ENCODE measurements at regions of chr9 and their contacts with region 1.

Region 1: GRCh38 chr9:36995927-36996705 is 38.0 kb downstream of the PAX5 start:
- DNase-seq: peak; percentile 50
- H3K4me3 ChIP-seq: peak overlapping the region; percentile 22
- H3K27ac ChIP-seq: no peak overlapping the region
- H3K4me1 ChIP-seq: no peaks in the 10 kb centered on the region
- H3K27me3 ChIP-seq: no peaks in the 10 kb centered on the region
- CTCF ChIP-seq: peak; percentile 52

Region 2: DNA sequence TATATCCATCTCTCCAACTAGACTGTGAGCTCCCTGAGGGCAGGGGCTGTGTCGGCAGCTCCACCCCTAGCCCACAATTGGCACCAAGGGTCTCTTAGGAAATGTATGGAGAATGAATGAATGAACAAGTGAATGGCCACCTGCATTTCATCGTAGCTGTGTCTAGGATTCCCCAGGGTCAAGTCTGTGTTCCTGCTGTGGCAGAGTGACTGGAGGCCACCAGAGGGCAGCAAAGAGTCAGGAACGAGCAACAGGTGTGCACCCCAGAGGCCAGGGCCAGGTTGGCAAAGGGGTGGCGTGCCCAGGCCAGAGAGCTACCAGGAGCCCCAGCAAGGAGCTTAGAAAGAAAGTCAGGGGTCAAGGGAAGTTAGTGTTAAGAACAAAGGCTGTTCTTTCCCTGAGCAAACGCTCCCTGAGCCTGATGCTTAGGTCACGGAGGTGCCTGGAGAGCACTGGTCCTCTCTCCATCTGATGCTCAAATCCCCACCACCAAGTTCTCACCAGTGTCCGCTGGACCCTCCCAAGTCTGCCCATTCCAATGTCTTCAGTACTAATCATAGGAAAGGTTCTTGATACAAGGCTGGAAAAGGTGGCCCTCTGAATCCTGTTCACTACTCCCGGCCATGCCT is 122.8 kb before region 1 on chr9:
- intact Hi-C with region 1: loop called (anchors 2 kb)
- DNase-seq: peak; percentile 76
- H3K4me3 ChIP-seq: no peak overlapping the region
- H3K27ac ChIP-seq: no peak overlapping the region
- H3K4me1 ChIP-seq: no peaks in the 10 kb centered on the region
- H3K27me3 ChIP-seq: no peaks in the 10 kb centered on the region
- CTCF ChIP-seq: peak; percentile 90

Region 3: DNA sequence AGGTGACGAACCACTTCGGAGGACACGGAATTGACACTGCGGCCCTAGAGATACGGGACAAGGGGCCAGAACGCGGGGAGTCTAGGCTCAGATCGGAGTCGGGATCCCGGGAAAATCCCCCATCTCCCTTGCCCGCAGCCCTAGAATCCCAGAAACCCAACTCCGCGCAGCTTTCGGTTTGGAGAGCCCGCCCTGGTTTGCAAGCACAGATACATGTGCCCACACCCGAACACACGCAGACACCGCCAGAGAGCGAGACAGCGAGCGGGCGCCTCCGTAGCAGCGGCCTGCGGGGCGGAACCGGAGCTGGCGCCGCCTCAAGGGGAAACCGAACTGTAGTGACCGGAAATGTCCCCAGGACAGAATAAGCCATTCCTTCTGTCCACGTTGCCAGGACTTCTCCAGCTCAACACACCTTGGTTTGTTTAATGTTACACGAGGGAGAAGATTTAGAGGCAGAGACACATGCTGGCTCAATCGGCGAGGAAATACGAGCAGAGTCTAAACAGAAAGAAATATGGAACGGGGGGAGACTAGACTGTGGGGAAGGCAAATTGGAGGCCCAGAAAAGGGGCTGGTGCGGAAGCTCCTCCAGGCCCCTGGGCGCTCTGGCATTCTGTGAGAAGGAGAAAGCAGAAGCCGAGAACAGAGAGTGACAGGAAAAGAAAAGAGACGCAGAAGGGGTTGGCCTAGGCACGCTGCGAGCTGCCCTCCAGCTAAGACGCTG is 40.8 kb after region 1 on chr9:
- intact Hi-C with region 1: no loop called
- DNase-seq: peak; percentile 47
- H3K4me3 ChIP-seq: peak overlapping the region; percentile 54
- H3K27ac ChIP-seq: no peak overlapping the region
- H3K4me1 ChIP-seq: peaks cover 22% of the 10 kb centered on the region
- H3K27me3 ChIP-seq: peaks cover 84% of the 10 kb centered on the region
- CTCF ChIP-seq: no peak

Region 4: DNA sequence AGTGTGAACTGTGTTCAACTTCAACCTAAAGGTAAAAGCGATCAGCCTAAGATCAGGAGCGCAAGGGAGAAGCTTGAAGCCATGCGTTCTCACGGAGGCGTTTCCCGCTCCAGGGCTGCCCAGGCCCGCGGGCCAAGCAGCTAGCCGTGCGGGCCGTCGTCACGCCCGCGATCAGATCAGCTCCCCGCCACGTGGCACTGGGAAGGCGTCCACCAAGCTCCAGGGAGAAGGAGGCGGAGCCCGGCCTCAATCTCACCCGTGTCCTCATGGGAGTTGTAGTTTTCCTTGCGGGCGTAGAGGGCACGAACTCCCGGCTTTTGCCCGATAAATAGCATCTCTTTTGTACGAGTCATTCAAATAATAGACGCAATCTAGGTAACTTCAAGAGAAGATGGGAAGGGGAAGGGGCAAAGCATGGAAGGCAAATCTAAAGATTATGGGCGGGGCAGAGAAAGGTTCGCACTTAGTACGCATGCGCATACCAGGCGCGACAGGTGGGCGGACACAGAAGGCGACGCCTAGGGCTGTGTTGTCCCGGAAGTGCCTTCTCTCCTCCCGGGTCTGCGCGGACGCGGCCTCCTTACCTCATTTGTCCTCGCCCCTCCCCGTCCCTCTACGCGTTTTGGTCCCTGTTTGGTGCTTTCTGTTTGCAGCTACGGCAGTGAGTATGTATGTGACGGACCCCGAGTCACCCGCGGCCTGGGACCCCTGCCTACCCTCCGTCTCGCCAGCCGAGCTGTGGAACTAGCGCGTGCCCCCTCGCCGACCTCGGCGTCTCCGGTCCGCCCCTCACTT is 83.5 kb after region 1 on chr9:
- intact Hi-C with region 1: no loop called
- DNase-seq: peak; percentile 93
- H3K4me3 ChIP-seq: peak overlapping the region; percentile 59
- H3K27ac ChIP-seq: peak overlapping the region; percentile 54
- H3K4me1 ChIP-seq: no peaks in the 10 kb centered on the region
- H3K27me3 ChIP-seq: no peaks in the 10 kb centered on the region
- CTCF ChIP-seq: no peak

Region 5: GRCh38 chr9:37209431-37210386 is 213.6 kb after region 1 on chr9:
- intact Hi-C with region 1: no loop called
- DNase-seq: no peak
- H3K4me3 ChIP-seq: no peak overlapping the region
- H3K27ac ChIP-seq: no peak overlapping the region
- H3K4me1 ChIP-seq: no peaks in the 10 kb centered on the region
- H3K27me3 ChIP-seq: no peaks in the 10 kb centered on the region
- CTCF ChIP-seq: no peak

Region 6: GRCh38 chr9:37390759-37391158 is 394.6 kb after region 1 on chr9:
- intact Hi-C with region 1: loop called (anchors 5 kb)
- DNase-seq: peak; percentile 63
- H3K4me3 ChIP-seq: no peak overlapping the region
- H3K27ac ChIP-seq: no peak overlapping the region
- H3K4me1 ChIP-seq: no peaks in the 10 kb centered on the region
- H3K27me3 ChIP-seq: no peaks in the 10 kb centered on the region
- CTCF ChIP-seq: peak; percentile 47

Region 7: DNA sequence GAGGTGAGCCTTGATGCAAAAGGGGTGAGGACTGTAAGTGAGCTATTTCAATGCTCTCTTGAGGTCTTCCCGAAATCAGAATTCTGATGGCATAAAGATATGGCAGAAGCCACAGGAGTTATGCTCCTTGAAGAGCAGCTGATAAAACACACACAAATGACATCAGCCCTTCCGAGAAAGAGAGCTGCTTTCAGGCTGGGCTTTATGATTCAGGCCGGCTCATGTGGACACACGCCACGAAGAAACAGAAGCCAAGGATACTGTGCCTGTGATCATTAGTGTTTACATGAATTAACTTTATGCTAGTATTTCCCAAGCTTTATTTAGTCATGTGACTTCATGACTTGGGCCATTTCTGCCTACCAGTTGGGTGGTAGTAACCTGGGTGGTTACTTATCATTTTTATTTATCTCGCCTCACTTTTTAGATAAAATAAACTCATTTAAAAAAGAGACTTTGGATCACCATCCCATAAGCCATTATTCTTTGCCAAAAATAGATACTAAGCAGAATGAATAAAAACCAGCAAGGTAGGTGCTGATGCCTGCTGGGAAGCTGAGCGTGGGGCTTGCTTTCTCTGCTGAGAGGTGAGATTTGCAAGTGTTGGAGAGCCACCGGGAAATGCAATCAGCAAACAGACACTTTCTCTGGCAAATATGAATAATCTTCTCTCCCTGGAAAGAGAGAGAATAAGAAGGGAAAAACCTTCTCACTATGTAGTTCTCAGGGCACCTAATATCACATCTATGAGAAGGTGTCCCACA is 980.8 kb after region 1 on chr9:
- intact Hi-C with region 1: no loop called
- DNase-seq: no peak
- H3K4me3 ChIP-seq: no peak overlapping the region
- H3K27ac ChIP-seq: no peak overlapping the region
- H3K4me1 ChIP-seq: no peaks in the 10 kb centered on the region
- H3K27me3 ChIP-seq: no peaks in the 10 kb centered on the region
- CTCF ChIP-seq: no peak